ENCODE measurements at regions of chrX and their contacts with region 1.

Region 1: GRCh38 chrX:100615005-100615404 is 21.6 kb downstream of the TSPAN6 start:
- DNase-seq: peak; percentile 25 to 71
- H3K4me3 ChIP-seq: no peak overlapping the region
- H3K27ac ChIP-seq: no peak overlapping the region
- H3K4me1 ChIP-seq: 0 out of 2 replicates have a peak, but pooled peaks cover 8% of the 10 kb centered on the region
- H3K27me3 ChIP-seq: no peaks in the 10 kb centered on the region
- CTCF ChIP-seq: peak; percentile 67

Region 2: GRCh38 chrX:100512471-100512870 is 102.5 kb before region 1 on chrX:
- CTCF ChIA-PET with region 1: no interaction called
- POLR2A ChIA-PET with region 1: no interaction called
- intact Hi-C with region 1: loop called (anchors 10 kb)
- DNase-seq: no peak
- H3K4me3 ChIP-seq: no peak overlapping the region
- H3K27ac ChIP-seq: no peak overlapping the region
- H3K4me1 ChIP-seq: no peaks in the 10 kb centered on the region
- H3K27me3 ChIP-seq: no peaks in the 10 kb centered on the region
- CTCF ChIP-seq: peak; percentile 70

Region 3: DNA sequence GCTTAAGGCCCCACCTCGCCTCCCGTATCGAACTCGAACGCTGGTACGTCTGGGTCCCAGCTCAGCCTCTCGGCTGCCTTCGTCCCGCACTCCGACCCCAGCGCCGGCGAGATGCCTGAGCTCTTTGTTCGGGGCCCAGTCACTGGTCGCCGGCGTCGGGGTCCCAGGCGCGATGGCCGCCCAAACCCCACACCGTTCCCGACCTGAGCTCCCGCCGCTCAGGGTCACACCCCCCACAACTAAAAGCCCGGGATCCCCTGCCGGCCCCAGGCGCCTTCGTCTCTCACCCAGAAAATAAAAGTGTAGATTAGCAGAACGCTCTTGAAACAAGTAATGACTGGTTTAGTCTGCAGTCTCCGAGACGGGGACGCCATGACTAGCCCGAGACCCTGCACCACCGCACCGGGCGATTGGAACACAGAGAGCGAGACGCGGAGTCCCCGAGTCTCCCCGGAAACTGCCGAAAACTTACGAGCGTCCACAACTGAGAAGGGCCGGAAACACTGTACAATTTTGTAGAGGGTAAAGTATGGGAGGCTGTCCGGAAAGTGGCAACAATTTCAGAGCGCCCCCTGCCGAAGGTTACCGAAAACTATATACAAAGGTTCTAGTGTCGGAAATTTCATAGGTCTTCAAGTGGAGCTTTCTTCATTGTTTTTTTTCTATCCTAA is 21.5 kb after region 1 on chrX and contains the start of gene TSPAN6:
- CTCF ChIA-PET with region 1: interaction called, 10 read pairs
- POLR2A ChIA-PET with region 1: no interaction called
- intact Hi-C with region 1: no loop called
- DNase-seq: peak; percentile 81 to 83
- H3K4me3 ChIP-seq: peak within 1 kb of the TSS; percentile 83
- H3K27ac ChIP-seq: peak within 1 kb of the TSS; percentile 49
- H3K4me1 ChIP-seq: peaks cover 25% of the 10 kb centered on the region
- H3K27me3 ChIP-seq: no peaks in the 10 kb centered on the region
- CTCF ChIP-seq: peak; percentile 72
- total RNA-seq, gene TSPAN6: 49.6 and 52.2 TPM in 2 replicates

Region 4: GRCh38 chrX:100659431-100660137 is 44.6 kb after region 1 on chrX:
- CTCF ChIA-PET with region 1: no interaction called
- POLR2A ChIA-PET with region 1: no interaction called
- intact Hi-C with region 1: loop called (anchors 5 kb)
- DNase-seq: no peak
- H3K4me3 ChIP-seq: no peak overlapping the region
- H3K27ac ChIP-seq: no peak overlapping the region
- H3K4me1 ChIP-seq: peaks cover 14% of the 10 kb centered on the region; the same call in 1 of the 2 replicates
- H3K27me3 ChIP-seq: no peaks in the 10 kb centered on the region
- CTCF ChIP-seq: no peak

Region 5: GRCh38 chrX:100685284-100685996 is 70.4 kb after region 1 on chrX:
- CTCF ChIA-PET with region 1: interaction called, 5 read pairs
- POLR2A ChIA-PET with region 1: no interaction called
- intact Hi-C with region 1: loop called (anchors 2 kb)
- DNase-seq: peak; percentile 64 to 67
- H3K4me3 ChIP-seq: no peak overlapping the region
- H3K27ac ChIP-seq: no peak overlapping the region
- H3K4me1 ChIP-seq: peaks cover under 1% of the 10 kb centered on the region
- H3K27me3 ChIP-seq: no peaks in the 10 kb centered on the region
- CTCF ChIP-seq: peak; percentile 88